B cell (primary cell): ENCODE measurements at regions of chr2 and their contacts with region 1.

Region 1: GRCh38 chr2:101697124-101698013 is at the start of gene MAP4K4:
- DNase-seq: peak; percentile 86
- ATAC-seq: peak; percentile 73
- H3K4me3 ChIP-seq: peak within 1 kb of the TSS; percentile 64 to 98 (median 80)
- H3K4me3 Mint-ChIP-seq: peak within 1 kb of the TSS; percentile 97
- H3K27ac ChIP-seq: peak within 1 kb of the TSS; percentile 59 to 78
- H3K27ac Mint-ChIP-seq: peak within 1 kb of the TSS; percentile 97
- H3K4me1 ChIP-seq: peaks cover 28 to 31% of the 10 kb centered on the region in 2 donors
- H3K4me1 Mint-ChIP-seq: peaks cover 24% of the 10 kb centered on the region
- H3K27me3 ChIP-seq: no peaks in the 10 kb centered on the region
- H3K27me3 Mint-ChIP-seq: no peaks in the 10 kb centered on the region
- CTCF ChIP-seq: no peak
- total RNA-seq, gene MAP4K4: 280 and 303 TPM in 2 replicates

Region 2: DNA sequence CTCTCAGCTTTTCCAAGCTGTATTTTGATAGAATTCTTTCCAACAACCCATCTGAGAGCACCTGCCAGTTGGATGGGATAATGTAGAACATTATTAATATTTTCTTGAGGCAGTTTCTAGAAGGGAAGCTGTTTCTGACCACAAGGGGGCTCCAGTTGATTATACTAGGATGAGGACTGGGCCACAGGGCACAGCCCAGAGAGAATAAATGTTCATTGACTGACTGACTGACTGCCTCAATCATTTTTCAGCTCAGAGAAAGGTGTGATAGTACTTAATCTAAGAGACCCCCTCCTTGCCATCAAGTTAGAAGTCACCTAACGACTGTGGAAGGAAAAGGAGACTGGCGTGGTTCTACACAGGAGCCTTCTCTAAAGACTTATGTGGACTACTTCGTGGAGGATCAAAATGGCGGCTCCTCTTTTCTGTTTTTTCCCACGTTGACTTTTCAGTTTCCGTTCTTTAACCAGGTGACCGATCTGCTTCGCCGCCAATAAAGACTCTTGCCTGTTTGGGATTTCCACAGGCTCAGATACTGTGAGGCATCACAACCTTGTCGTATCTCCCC is 278.2 kb before region 1 on chr2:
- CTCF ChIA-PET with region 1: interaction called, 14 read pairs
- POLR2A ChIA-PET with region 1: no interaction called
- intact Hi-C with region 1: loop called (anchors 5 kb)
- DNase-seq: peak; percentile 78
- ATAC-seq: peak; percentile 82
- H3K4me3 ChIP-seq: no peak overlapping the region
- H3K4me3 Mint-ChIP-seq: no peak overlapping the region
- H3K27ac ChIP-seq: no peak overlapping the region
- H3K27ac Mint-ChIP-seq: no peak overlapping the region
- H3K4me1 ChIP-seq: no peaks in the 10 kb centered on the region
- H3K4me1 Mint-ChIP-seq: no peaks in the 10 kb centered on the region
- H3K27me3 ChIP-seq: peaks cover 0 to 5% (median 0%) of the 10 kb centered on the region in 4 experiments
- H3K27me3 Mint-ChIP-seq: peaks cover 8% of the 10 kb centered on the region
- CTCF ChIP-seq: peak; percentile 88

Region 3: DNA sequence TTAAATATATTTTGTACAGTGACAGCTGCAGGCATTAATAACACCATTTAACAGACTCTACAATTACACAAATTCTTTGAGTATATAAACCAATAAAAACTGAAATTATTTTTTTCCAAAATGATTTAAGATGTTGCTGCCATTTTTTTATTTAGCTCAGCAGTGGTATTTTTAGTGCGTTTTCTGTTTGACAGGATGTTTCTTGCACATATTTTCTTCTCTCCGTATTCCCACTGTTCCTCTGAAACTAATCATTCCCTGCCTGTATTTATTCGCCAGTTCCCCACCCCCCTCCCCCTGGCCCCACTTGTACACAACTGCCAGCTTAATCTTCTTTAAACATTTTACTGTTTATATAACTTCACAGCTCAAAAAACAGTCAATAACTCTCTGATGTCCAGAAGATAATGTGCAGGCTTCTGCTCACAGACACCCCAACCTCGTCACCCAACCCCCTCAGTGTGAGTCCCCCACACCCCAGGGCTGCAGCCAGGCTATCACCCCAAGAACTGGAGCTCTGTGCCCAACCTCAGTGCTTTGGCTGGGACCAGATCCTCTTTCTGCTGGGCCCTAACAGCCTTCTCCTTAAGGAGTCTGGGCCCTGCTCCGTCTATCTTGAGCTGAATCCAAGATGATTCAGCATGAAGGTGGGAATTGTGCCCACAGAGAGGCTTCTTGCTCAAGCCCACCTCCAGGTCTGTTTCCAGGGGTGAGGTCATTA is 41.5 kb before region 1 on chr2:
- CTCF ChIA-PET with region 1: no interaction called
- POLR2A ChIA-PET with region 1: interaction called, 4 read pairs
- intact Hi-C with region 1: loop called (anchors 5 kb)
- DNase-seq: no peak
- ATAC-seq: no peak
- H3K4me3 ChIP-seq: no peak overlapping the region
- H3K4me3 Mint-ChIP-seq: no peak overlapping the region
- H3K27ac ChIP-seq: no peak overlapping the region
- H3K27ac Mint-ChIP-seq: no peak overlapping the region
- H3K4me1 ChIP-seq: peaks cover 11 to 16% of the 10 kb centered on the region in 2 donors
- H3K4me1 Mint-ChIP-seq: peaks cover 15% of the 10 kb centered on the region
- H3K27me3 ChIP-seq: no peaks in the 10 kb centered on the region
- H3K27me3 Mint-ChIP-seq: no peaks in the 10 kb centered on the region
- CTCF ChIP-seq: no peak

Region 4: DNA sequence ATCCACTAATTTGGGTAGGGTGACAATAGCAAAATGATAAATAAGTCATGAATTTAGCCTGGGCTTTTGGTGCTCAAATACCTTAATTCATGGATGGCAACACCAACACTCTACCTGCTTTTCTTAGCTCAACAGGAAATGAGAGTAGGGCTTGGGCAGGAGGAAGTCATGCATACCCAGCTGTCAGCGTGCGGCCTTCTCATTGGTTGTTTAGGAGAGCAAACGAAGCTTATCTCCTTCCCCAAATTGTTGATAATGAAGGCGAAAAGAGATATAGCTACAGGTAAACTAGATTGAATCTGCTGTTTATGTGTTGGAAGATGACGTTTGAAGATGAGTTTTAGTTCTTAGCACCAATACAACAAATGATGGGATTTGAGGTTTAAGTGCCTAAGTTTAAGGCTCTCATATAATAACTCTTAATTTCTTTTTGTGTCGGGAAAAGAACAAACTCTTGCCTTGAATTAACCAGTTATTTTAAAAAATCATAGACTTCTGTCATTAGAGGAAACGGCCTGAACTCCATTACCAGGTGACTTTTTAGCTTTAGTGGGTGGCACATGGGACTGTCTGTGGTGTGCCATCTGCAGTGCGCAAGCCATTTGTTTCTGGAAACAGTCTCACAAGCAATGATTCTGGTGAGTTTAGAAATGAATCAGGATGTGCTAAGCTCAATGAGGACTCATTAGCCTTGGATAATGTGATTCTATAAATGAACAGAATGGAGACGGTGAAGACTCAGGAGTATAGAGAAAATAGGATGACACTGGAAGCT is 19.9 kb after region 1 on chr2:
- CTCF ChIA-PET with region 1: interaction called, 22 read pairs
- POLR2A ChIA-PET with region 1: interaction called, 7 read pairs
- intact Hi-C with region 1: loop called (anchors 1 kb)
- DNase-seq: peak; percentile 93
- ATAC-seq: peak; percentile 85
- H3K4me3 ChIP-seq: peak overlapping the region in 4 of 5 experiments; percentile 5 to 52 (median 19)
- H3K4me3 Mint-ChIP-seq: peak overlapping the region; percentile 83
- H3K27ac ChIP-seq: peak overlapping the region; percentile 94 to 99
- H3K27ac Mint-ChIP-seq: peak overlapping the region; percentile 96
- H3K4me1 ChIP-seq: peaks cover 92 to 93% of the 10 kb centered on the region in 2 donors
- H3K4me1 Mint-ChIP-seq: peaks cover 83% of the 10 kb centered on the region
- H3K27me3 ChIP-seq: no peaks in the 10 kb centered on the region
- H3K27me3 Mint-ChIP-seq: no peaks in the 10 kb centered on the region
- CTCF ChIP-seq: no peak

Region 5: GRCh38 chr2:101751875-101752619 is 54.7 kb after region 1 on chr2:
- CTCF ChIA-PET with region 1: interaction called, 5 read pairs
- POLR2A ChIA-PET with region 1: interaction called, 7 read pairs
- intact Hi-C with region 1: loop called (anchors 2 kb)
- DNase-seq: peak; percentile 82
- ATAC-seq: peak; percentile 83
- H3K4me3 ChIP-seq: peak overlapping the region in 2 of 5 experiments; percentile 8 to 28
- H3K4me3 Mint-ChIP-seq: peak overlapping the region; percentile 74
- H3K27ac ChIP-seq: peak overlapping the region; percentile 68 to 85
- H3K27ac Mint-ChIP-seq: peak overlapping the region; percentile 85
- H3K4me1 ChIP-seq: peaks cover 77 to 78% of the 10 kb centered on the region in 2 donors
- H3K4me1 Mint-ChIP-seq: peaks cover 80% of the 10 kb centered on the region
- H3K27me3 ChIP-seq: no peaks in the 10 kb centered on the region
- H3K27me3 Mint-ChIP-seq: no peaks in the 10 kb centered on the region
- CTCF ChIP-seq: no peak

Region 6: GRCh38 chr2:101823347-101823791 is 126.0 kb after region 1 on chr2:
- CTCF ChIA-PET with region 1: interaction called, 11 read pairs
- POLR2A ChIA-PET with region 1: no interaction called
- intact Hi-C with region 1: loop called (anchors 5 kb)
- DNase-seq: peak; percentile 78
- ATAC-seq: peak; percentile 91
- H3K4me3 ChIP-seq: no peak overlapping the region
- H3K4me3 Mint-ChIP-seq: peak overlapping the region; percentile 40
- H3K27ac ChIP-seq: peak overlapping the region in 1 of 2 donors; percentile 64
- H3K27ac Mint-ChIP-seq: peak overlapping the region; percentile 32
- H3K4me1 ChIP-seq: peaks cover 23 to 46% of the 10 kb centered on the region in 2 donors
- H3K4me1 Mint-ChIP-seq: peaks cover 69% of the 10 kb centered on the region
- H3K27me3 ChIP-seq: no peaks in the 10 kb centered on the region
- H3K27me3 Mint-ChIP-seq: no peaks in the 10 kb centered on the region
- CTCF ChIP-seq: peak; percentile 88

Region 7: DNA sequence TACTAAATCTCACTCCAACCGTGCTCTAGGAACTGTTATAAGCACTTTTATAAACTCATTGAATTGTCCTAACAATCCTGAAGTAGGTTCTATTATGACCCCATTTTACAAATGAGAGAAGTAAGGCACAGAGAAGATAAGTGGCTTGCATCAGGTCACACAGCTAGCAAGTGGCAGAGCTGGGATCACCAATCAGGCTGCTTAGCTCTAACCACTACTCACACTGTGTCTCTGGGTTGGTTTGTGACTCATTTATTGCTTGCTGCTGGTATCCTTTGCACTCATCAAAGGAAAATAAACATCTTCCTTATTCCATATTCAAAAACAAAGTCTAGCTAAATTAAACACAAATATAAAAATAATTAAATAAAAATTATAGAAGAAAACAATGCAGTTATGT is 251.9 kb after region 1 on chr2:
- CTCF ChIA-PET with region 1: no interaction called
- POLR2A ChIA-PET with region 1: no interaction called
- intact Hi-C with region 1: no loop called
- DNase-seq: no peak
- ATAC-seq: no peak
- H3K4me3 ChIP-seq: no peak overlapping the region
- H3K4me3 Mint-ChIP-seq: no peak overlapping the region
- H3K27ac ChIP-seq: no peak overlapping the region
- H3K27ac Mint-ChIP-seq: no peak overlapping the region
- H3K4me1 ChIP-seq: no peaks in the 10 kb centered on the region
- H3K4me1 Mint-ChIP-seq: no peaks in the 10 kb centered on the region
- H3K27me3 ChIP-seq: peaks cover 0 to 2% (median 0%) of the 10 kb centered on the region in 4 experiments
- H3K27me3 Mint-ChIP-seq: peaks cover 20% of the 10 kb centered on the region
- CTCF ChIP-seq: no peak